Esophagus squamous epithelium (tissue), 5 donors: ENCODE measurements at regions of chr10 and their contacts with region 1.

Region 1: GRCh38 chr10:102802920-102803534 is 34.2 kb downstream of the CYP17A1 start:
- DNase-seq: no peak
- H3K4me3 ChIP-seq: no peak overlapping the region
- H3K27ac ChIP-seq: peak overlapping the region; percentile 16 to 79 (median 60)
- H3K4me1 ChIP-seq: peaks cover 24 to 63% (median 37%) of the 10 kb centered on the region in 3 donors
- H3K27me3 ChIP-seq: no peaks in the 10 kb centered on the region
- CTCF ChIP-seq: no peak
- POLR2A ChIP-seq: no peak

Region 2: GRCh38 chr10:102268375-102268888 is 534.6 kb before region 1 on chr10:
- intact Hi-C with region 1: no loop called
- DNase-seq: no peak
- H3K4me3 ChIP-seq: no peak overlapping the region
- H3K27ac ChIP-seq: peak overlapping the region in 2 of 4 donors; percentile 8 to 14
- H3K4me1 ChIP-seq: peaks cover 0 to 31% (median 13%) of the 10 kb centered on the region in 3 donors
- H3K27me3 ChIP-seq: no peaks in the 10 kb centered on the region
- CTCF ChIP-seq: no peak
- POLR2A ChIP-seq: no peak

Region 3: GRCh38 chr10:102615361-102615760 is 187.7 kb before region 1 on chr10:
- intact Hi-C with region 1: no loop called
- DNase-seq: no peak
- H3K4me3 ChIP-seq: no peak overlapping the region
- H3K27ac ChIP-seq: peak overlapping the region; percentile 18 to 76 (median 50)
- H3K4me1 ChIP-seq: peaks cover 21 to 94% (median 70%) of the 10 kb centered on the region in 3 donors
- H3K27me3 ChIP-seq: no peaks in the 10 kb centered on the region
- CTCF ChIP-seq: no peak
- POLR2A ChIP-seq: no peak

Region 4: GRCh38 chr10:102752934-102753664 is 49.9 kb before region 1 on chr10:
- intact Hi-C with region 1: loop called (anchors 10 kb)
- DNase-seq: no peak
- H3K4me3 ChIP-seq: no peak overlapping the region
- H3K27ac ChIP-seq: peak overlapping the region; percentile 57 to 91 (median 75)
- H3K4me1 ChIP-seq: peaks cover 10 to 63% (median 24%) of the 10 kb centered on the region in 3 donors
- H3K27me3 ChIP-seq: no peaks in the 10 kb centered on the region
- CTCF ChIP-seq: peak; percentile 21 to 59 (median 48)
- POLR2A ChIP-seq: no peak